Activated naive CD4-positive, alpha-beta T cell treated with anti-CD3 and anti-CD28 coated beads for 36 hours (primary cell): ENCODE measurements at regions of chr2 and their contacts with region 1.

Region 1: DNA sequence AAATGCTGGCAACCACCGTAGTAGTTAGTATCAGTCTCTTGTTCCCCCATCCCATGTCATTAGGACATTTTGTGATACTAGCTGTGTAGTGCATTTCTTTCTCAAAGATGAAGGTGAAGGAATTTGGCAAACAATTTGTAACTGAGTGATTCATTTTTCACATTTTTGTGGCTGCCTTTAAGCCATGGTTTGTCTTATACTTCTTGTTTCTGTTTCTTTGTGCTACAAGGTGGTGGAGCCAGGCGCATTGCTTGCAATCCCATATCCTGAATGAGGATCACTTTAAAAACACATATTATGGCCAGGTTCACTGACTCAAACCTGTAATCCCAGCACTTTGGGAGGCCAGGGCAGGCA is 40.6 kb downstream of the GPD2 start:
- DNase-seq: peak; percentile 16
- H3K4me3 Mint-ChIP-seq: no peak overlapping the region
- H3K27ac Mint-ChIP-seq: no peak overlapping the region
- H3K4me1 Mint-ChIP-seq: peaks cover 31% of the 10 kb centered on the region
- H3K27me3 Mint-ChIP-seq: no peaks in the 10 kb centered on the region

Region 2: GRCh38 chr2:156435715-156436496 is 40.9 kb before region 1 on chr2 and contains the start of gene GPD2:
- CTCF ChIA-PET with region 1: no interaction called
- intact Hi-C with region 1: loop called (anchors 2 kb)
- DNase-seq: peak; percentile 56
- H3K4me3 Mint-ChIP-seq: peak within 1 kb of the TSS; percentile 94
- H3K27ac Mint-ChIP-seq: peak within 1 kb of the TSS; percentile 92
- H3K4me1 Mint-ChIP-seq: peaks cover 30% of the 10 kb centered on the region
- H3K27me3 Mint-ChIP-seq: no peaks in the 10 kb centered on the region
- total RNA-seq, gene GPD2: 18.8 to 19.9 TPM

Region 3: GRCh38 chr2:156455451-156455901 is 21.4 kb before region 1 on chr2:
- CTCF ChIA-PET with region 1: interaction called, 4 read pairs
- intact Hi-C with region 1: loop called (anchors 1 kb)
- DNase-seq: no peak
- H3K4me3 Mint-ChIP-seq: no peak overlapping the region
- H3K27ac Mint-ChIP-seq: no peak overlapping the region
- H3K4me1 Mint-ChIP-seq: peaks cover 18% of the 10 kb centered on the region
- H3K27me3 Mint-ChIP-seq: no peaks in the 10 kb centered on the region

Region 4: DNA sequence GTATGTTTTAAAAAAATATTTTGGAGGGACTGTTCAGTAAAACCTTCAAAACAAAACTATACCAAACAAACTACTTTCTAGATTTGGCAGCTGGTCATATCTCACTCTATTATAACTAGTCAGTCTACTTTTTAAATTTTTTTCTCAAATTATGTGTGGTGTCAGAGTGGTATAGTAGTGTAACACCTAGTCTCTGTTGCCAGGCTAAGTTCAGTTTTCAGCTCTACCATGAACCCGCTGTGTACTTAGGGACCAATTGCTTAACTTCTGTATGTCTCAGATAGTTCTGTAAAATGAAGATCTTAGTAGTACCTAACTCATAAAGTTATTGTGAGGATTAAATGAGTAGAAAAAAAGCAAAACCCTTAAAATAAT is 13.6 kb after region 1 on chr2:
- CTCF ChIA-PET with region 1: no interaction called
- intact Hi-C with region 1: loop called (anchors 1 kb)
- DNase-seq: no peak
- H3K4me3 Mint-ChIP-seq: no peak overlapping the region
- H3K27ac Mint-ChIP-seq: no peak overlapping the region
- H3K4me1 Mint-ChIP-seq: peaks cover 40% of the 10 kb centered on the region
- H3K27me3 Mint-ChIP-seq: no peaks in the 10 kb centered on the region

Region 5: DNA sequence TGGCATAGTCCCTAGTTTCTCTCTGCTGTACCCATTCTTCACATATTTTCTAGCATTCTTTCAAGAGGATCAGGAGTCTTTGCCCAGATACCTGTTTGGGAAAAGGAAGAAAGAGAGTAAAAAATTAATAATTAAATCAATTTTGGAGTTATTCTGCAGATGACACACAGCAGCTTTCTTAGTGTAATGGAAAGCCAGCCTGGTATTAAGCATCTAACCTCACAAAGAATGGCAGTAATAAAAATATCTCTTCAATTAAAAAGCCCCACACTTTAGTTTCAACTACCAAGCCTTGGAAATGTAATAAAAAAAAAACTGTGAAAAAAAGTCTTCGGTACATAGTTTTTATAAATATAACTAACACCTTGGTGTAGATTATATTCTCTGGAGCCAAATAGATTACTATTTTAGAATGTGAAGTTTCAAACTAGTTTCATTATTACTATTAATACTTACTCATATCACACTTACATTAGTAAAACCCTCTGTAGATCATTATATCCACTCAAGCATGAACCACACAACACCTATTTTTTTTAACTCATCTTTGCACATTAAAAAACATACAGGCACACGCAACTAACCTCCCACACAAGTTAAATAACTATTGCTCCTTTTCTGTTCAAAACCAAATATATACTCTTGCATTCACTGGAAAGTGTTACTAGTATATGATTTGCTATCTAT is 50.3 kb after region 1 on chr2:
- CTCF ChIA-PET with region 1: no interaction called
- intact Hi-C with region 1: loop called (anchors 2 kb)
- DNase-seq: no peak
- H3K4me3 Mint-ChIP-seq: no peak overlapping the region
- H3K27ac Mint-ChIP-seq: no peak overlapping the region
- H3K4me1 Mint-ChIP-seq: peaks cover 9% of the 10 kb centered on the region
- H3K27me3 Mint-ChIP-seq: no peaks in the 10 kb centered on the region